HAP-1 (cell line): ENCODE measurements at regions of chr3 and their contacts with region 1.

Region 1: GRCh38 chr3:99842826-99843589 is 25.3 kb downstream of the CMSS1 start:
- DNase-seq: peak in 1 of 2 experiments; percentile 60
- H3K4me3 ChIP-seq: no peak overlapping the region
- H3K4me1 ChIP-seq: peaks cover 4% of the 10 kb centered on the region
- H3K27me3 ChIP-seq: no peaks in the 10 kb centered on the region

Region 2: GRCh38 chr3:99532246-99532645 is 310.8 kb before region 1 on chr3:
- in situ Hi-C with region 1: no loop called
- DNase-seq: peak; percentile 44 to 62
- H3K4me3 ChIP-seq: no peak overlapping the region
- H3K4me1 ChIP-seq: no peaks in the 10 kb centered on the region
- H3K27me3 ChIP-seq: no peaks in the 10 kb centered on the region; the same call in none of the 2 replicates

Region 3: DNA sequence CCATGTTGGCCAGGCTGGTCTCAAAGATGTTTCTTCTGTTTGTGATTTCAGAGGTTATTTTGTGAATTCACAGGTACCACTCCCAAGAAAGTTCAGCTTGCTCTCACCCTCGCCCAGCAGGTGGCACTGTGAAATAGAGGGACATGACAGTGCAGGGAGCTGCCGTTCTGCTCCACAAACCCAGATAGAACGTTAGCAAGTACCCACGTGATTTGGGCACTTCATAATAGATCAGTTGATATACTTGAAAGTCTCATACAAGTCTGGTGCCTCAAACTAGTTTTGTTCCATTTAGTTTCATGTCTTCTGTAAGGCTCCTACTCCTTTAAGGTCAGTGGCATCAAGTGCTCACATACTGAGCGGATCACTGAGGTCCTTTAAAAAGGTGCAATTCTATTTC is 225.8 kb after region 1 on chr3:
- in situ Hi-C with region 1: loop called (anchors 25 kb)
- DNase-seq: peak; percentile 62 to 88
- H3K4me3 ChIP-seq: no peak overlapping the region
- H3K4me1 ChIP-seq: peaks cover 21% of the 10 kb centered on the region
- H3K27me3 ChIP-seq: no peaks in the 10 kb centered on the region

Region 4: GRCh38 chr3:100159331-100160153 is 316.5 kb after region 1 on chr3:
- in situ Hi-C with region 1: no loop called
- DNase-seq: no peak
- H3K4me3 ChIP-seq: no peak overlapping the region
- H3K4me1 ChIP-seq: no peaks in the 10 kb centered on the region
- H3K27me3 ChIP-seq: no peaks in the 10 kb centered on the region